Posterior vena cava (tissue), 2 donors: ENCODE measurements at regions of chr9 and their contacts with region 1.

Region 1: DNA sequence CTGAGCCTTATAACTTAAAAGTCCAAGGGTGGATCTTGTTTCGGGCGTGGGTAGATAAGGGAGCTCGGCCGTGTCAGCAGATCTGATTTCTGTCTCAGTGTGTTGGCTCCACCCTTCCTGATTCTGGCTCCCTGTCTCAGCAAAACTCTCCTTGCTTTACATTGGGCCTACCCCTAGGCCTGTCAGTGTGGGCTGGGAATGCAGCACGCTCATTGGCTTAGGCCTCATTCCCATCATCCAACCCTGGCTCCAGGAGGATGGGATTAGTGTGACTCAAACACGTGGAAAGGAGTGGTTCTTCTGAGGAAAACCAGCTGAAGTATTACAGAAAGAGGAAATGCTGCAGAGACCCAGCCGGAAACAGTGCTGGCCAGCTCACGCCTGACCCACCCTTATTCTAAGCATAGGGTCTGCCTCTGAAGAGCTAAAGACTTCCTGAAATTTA is 59.9 kb downstream of the ZFAND5 start:
- DNase-seq: peak; percentile 92

Region 2: GRCh38 chr9:71270554-71270953 is 1034.6 kb before region 1 on chr9:
- intact Hi-C with region 1: no loop called
- DNase-seq: no peak

Region 3: DNA sequence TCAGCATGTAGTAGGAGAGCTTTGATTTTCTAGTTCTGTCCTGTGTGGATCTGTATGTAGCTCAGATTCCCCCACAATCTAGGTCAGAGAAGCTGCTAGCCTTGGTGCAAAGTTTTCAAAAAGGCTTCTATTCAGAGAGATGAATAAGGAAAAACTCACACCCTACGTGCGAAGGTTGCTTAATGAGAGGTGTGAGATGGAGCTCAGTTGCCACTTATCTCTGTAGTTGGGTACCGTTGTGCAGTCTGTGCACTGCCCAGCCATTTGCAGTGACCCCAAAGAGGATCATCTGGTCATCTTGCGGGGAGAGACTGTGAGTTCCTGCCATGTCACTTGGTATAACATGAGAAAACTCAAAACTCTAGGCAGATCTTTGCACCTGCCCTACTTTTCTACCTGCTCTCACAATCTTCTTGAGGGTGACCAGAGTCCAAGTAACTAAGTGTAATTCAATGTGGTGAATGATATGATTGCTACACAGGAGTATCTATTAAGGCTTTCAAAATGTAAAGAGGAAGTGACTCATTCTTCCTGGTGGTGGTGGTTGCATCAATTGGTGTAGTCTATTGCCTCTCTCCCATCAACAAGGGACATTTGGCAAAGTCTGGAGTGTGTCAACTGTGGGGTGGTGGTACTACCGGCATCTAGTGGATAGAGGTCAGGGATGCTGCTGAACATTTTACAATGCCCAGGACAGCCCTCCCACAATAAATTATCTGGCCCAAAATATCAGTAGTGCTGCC is 281.4 kb after region 1 on chr9:
- intact Hi-C with region 1: loop called in 1 of 2 experiments (anchors 10 kb)
- DNase-seq: no peak